ENCODE measurements at regions of chr2 and their contacts with region 1.

Region 1: GRCh38 chr2:65939687-65940086 is 495.2 kb upstream of the MEIS1 start:
- DNase-seq: no peak
- ATAC-seq: no peak
- H3K4me3 ChIP-seq: no peak overlapping the region
- H3K27ac ChIP-seq: no peak overlapping the region
- H3K4me1 ChIP-seq: no peaks in the 10 kb centered on the region
- H3K27me3 ChIP-seq: no peaks in the 10 kb centered on the region
- CTCF ChIP-seq: no peak
- POLR2A ChIP-seq: no peak
- RAD21 ChIP-seq: no peak

Region 2: GRCh38 chr2:65789923-65790675 is 149.6 kb before region 1 on chr2:
- CTCF ChIA-PET with region 1: no interaction called
- POLR2A ChIA-PET with region 1: no interaction called
- dilution Hi-C with region 1: no loop called
- in situ Hi-C with region 1: no loop called
- intact Hi-C with region 1: no loop called
- DNase-seq: no peak
- ATAC-seq: no peak
- H3K4me3 ChIP-seq: no peak overlapping the region
- H3K27ac ChIP-seq: no peak overlapping the region
- H3K4me1 ChIP-seq: no peaks in the 10 kb centered on the region
- H3K27me3 ChIP-seq: peaks cover 2% of the 10 kb centered on the region
- CTCF ChIP-seq: no peak
- POLR2A ChIP-seq: no peak
- RAD21 ChIP-seq: no peak

Region 3: GRCh38 chr2:65974067-65974723 is 34.5 kb after region 1 on chr2:
- CTCF ChIA-PET with region 1: interaction called, 10 read pairs
- POLR2A ChIA-PET with region 1: no interaction called
- dilution Hi-C with region 1: no loop called
- in situ Hi-C with region 1: no loop called
- intact Hi-C with region 1: no loop called
- DNase-seq: no peak
- ATAC-seq: no peak
- H3K4me3 ChIP-seq: no peak overlapping the region
- H3K27ac ChIP-seq: no peak overlapping the region
- H3K4me1 ChIP-seq: no peaks in the 10 kb centered on the region
- H3K27me3 ChIP-seq: no peaks in the 10 kb centered on the region
- CTCF ChIP-seq: no peak
- POLR2A ChIP-seq: no peak
- RAD21 ChIP-seq: no peak

Measured in IMR-90 (cell line).